PC-9 (cell line): ENCODE measurements at regions of chr6 and their contacts with region 1.

Region 1: DNA sequence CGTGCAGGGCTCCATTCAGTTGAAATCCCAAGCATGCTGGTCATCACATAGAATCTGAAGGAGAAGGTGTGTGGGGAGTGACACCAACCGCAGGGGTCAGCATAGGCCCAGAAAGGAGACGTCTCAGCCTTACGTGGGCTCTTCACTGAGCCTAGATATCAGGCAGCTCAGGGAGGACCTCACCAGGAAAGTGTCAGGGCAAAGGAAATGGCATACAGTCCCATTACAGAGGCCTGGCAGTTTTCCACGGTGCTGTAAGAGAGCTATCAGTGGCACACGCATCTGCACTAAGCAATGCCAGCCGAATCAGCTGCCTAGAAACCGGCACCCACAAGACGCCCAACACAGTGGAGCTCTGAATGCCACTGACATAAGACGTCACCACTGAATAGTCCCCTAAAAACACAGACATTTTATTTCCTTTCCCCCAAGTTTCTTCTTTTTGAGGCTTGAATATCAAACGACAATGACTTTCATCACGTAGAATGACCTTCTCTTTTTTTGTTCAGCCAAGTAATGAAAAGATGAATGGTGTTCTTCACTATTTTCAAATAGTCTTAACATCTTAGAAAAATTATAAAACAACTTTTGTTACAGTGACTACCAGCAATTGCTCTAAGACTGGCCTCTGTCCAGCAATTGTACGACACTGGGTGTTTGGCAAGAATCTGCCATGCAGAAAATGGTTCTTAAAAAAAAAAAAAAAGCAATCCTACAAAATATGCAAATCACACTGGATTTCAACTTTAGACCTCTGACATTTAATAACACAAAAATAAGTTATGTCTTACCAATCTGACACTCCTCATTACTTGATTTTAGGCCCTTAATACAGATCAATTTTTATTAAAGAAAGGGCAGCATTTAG is 88.9 kb upstream of the FOXQ1 start:
- DNase-seq: no peak
- H3K4me3 ChIP-seq: no peak overlapping the region
- H3K27ac ChIP-seq: no peak overlapping the region
- H3K4me1 ChIP-seq: no peaks in the 10 kb centered on the region
- H3K27me3 ChIP-seq: no peaks in the 10 kb centered on the region
- CTCF ChIP-seq: no peak

Region 2: GRCh38 chr6:609905-610304 is 613.1 kb before region 1 on chr6:
- CTCF ChIA-PET with region 1: no interaction called
- POLR2A ChIA-PET with region 1: interaction called, 10 read pairs
- intact Hi-C with region 1: no loop called
- DNase-seq: no peak
- H3K4me3 ChIP-seq: no peak overlapping the region
- H3K27ac ChIP-seq: no peak overlapping the region
- H3K4me1 ChIP-seq: no peaks in the 10 kb centered on the region
- H3K27me3 ChIP-seq: no peaks in the 10 kb centered on the region
- CTCF ChIP-seq: no peak

Region 3: DNA sequence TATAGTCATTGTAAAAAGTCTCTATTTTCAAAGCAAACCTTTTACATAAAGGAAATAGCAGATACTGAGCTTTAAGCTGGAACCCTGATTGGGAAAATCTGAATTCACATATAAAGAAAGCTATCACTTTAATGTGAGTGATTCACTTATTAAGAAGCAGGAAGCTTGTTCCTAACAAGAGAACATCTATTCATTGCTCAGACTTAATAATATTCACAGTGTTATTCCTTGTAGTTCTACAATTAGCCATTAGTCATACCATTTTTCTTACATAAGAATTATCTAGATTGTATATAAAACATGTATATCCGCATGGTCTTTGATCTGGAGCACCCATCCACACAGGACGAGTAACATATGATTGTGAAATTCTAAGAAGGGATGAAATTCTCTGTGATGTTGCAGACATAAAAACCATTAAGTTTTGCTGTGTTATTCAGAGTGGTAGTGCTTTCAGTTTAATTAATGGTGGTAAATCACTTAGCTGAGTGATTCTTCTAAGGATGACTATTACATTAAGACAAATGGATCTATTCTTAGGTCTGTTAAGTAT is 17.9 kb after region 1 on chr6:
- CTCF ChIA-PET with region 1: no interaction called
- POLR2A ChIA-PET with region 1: no interaction called
- intact Hi-C with region 1: no loop called
- DNase-seq: peak in 1 of 2 experiments; percentile 73
- H3K4me3 ChIP-seq: no peak overlapping the region
- H3K27ac ChIP-seq: 0 out of 2 replicates have a peak overlapping the region, but pooled peaks have one; percentile 1
- H3K4me1 ChIP-seq: peaks cover 8% of the 10 kb centered on the region; the same call in 1 of the 2 replicates
- H3K27me3 ChIP-seq: no peaks in the 10 kb centered on the region
- CTCF ChIP-seq: no peak